ENCODE measurements at regions of chr6 and their contacts with region 1.

Region 1: GRCh38 chr6:137313928-137314855 is 95.0 kb upstream of the IFNGR1 start:
- H3K4me3 ChIP-seq: no peak overlapping the region
- H3K27ac ChIP-seq: no peak overlapping the region
- H3K4me1 ChIP-seq: peaks cover 11% of the 10 kb centered on the region; the same call in 1 of the 2 replicates
- CTCF ChIP-seq: peak; percentile 70; the same call in 1 of the 2 replicates

Region 2: GRCh38 chr6:137094411-137095008 is 219.7 kb before region 1 on chr6:
- CTCF ChIA-PET with region 1: interaction called, 62 read pairs
- POLR2A ChIA-PET with region 1: no interaction called
- H3K4me3 ChIP-seq: no peak overlapping the region
- H3K27ac ChIP-seq: no peak overlapping the region
- H3K4me1 ChIP-seq: no peaks in the 10 kb centered on the region
- CTCF ChIP-seq: peak; percentile 49; the same call in 1 of the 2 replicates

Region 3: DNA sequence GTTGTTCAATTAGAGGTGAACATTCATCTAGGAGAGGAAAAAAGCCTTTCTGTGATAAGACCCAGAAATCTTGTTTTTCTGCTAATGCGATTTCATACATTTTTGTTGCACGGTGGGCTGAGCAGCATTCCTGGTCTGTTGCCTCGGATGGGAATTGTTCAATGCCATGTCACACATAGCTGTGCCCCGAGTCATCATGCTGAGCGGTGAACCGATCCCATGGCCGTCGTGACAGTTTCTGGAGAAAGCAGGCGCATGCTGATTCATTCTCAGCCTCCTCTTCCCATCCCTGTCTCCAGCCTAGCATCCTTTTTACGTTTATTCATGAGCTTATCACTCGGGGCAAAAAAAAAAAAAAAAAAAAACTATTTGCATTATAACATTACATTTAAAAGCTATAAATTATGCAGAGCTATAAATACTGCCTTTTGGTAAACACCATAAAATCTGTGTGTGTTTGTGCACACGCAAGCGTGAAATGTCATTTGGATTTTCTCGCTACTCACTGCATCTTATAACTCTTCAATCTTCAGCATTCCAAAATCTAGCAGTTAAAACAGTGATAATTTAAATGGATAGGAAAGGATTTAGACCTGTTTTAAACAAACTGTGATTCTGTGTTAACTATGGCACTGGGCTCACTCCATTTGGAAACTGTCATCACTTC is 36.1 kb before region 1 on chr6:
- CTCF ChIA-PET with region 1: interaction called, 30 read pairs
- POLR2A ChIA-PET with region 1: no interaction called
- H3K4me3 ChIP-seq: no peak overlapping the region
- H3K27ac ChIP-seq: no peak overlapping the region
- H3K4me1 ChIP-seq: peaks cover 9% of the 10 kb centered on the region
- CTCF ChIP-seq: no peak

Region 4: DNA sequence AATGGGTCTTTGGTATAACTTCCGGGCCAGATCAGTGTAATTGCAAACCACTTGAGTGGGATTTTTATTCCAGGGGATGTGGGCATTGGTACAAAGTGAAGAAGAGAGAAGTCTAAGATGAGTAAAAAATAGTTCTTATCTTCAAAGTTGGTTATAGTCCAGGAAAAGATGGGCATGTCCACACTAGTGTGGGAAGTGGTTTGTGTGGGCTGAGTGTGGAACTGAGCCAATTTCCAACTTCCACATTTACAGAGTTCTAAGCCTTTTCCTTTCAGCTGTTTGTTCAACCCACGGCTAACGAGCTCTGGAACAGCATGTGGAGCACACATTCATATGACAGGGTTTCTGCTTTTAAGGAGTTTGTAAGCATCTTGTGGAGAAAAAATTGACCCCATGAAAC is 22.8 kb before region 1 on chr6:
- CTCF ChIA-PET with region 1: interaction called, 16 read pairs
- POLR2A ChIA-PET with region 1: interaction called, 5 read pairs
- H3K4me3 ChIP-seq: no peak overlapping the region
- H3K27ac ChIP-seq: no peak overlapping the region
- H3K4me1 ChIP-seq: peaks cover 4% of the 10 kb centered on the region; the same call in 1 of the 2 replicates
- CTCF ChIP-seq: no peak

Region 5: DNA sequence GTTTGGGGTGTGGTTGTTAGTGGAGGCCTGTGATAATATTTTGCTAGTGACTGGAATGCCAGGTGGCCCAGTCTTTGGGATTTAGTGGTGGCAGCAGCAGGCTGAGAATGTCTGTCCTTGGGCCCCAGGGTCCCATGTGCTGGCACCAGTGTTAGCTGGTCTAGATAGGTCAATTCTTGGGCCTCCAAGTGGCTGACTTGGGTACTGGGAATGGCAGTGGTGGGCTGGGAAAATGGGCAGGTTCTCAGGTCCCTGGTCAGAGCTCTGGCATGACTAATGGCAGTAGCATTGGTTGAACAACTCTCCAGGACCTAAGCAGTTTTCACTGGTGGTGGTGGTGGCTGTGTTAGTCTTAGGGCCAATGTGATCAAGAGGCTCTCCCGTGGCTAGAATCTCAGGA is 129.7 kb after region 1 on chr6:
- CTCF ChIA-PET with region 1: no interaction called
- POLR2A ChIA-PET with region 1: no interaction called
- H3K4me3 ChIP-seq: no peak overlapping the region
- H3K27ac ChIP-seq: no peak overlapping the region
- H3K4me1 ChIP-seq: no peaks in the 10 kb centered on the region
- CTCF ChIP-seq: no peak

Region 6: GRCh38 chr6:137589067-137589848 is 275.1 kb after region 1 on chr6:
- CTCF ChIA-PET with region 1: interaction called, 12 read pairs
- POLR2A ChIA-PET with region 1: no interaction called
- H3K4me3 ChIP-seq: no peak overlapping the region
- H3K27ac ChIP-seq: no peak overlapping the region
- H3K4me1 ChIP-seq: no peaks in the 10 kb centered on the region
- CTCF ChIP-seq: 0 out of 2 replicates have a peak, but pooled peaks have one; percentile 19

Measured in HEK293 (cell line).